AG04450 (cell line): ENCODE measurements at regions of chr6 and their contacts with region 1.

Region 1: DNA sequence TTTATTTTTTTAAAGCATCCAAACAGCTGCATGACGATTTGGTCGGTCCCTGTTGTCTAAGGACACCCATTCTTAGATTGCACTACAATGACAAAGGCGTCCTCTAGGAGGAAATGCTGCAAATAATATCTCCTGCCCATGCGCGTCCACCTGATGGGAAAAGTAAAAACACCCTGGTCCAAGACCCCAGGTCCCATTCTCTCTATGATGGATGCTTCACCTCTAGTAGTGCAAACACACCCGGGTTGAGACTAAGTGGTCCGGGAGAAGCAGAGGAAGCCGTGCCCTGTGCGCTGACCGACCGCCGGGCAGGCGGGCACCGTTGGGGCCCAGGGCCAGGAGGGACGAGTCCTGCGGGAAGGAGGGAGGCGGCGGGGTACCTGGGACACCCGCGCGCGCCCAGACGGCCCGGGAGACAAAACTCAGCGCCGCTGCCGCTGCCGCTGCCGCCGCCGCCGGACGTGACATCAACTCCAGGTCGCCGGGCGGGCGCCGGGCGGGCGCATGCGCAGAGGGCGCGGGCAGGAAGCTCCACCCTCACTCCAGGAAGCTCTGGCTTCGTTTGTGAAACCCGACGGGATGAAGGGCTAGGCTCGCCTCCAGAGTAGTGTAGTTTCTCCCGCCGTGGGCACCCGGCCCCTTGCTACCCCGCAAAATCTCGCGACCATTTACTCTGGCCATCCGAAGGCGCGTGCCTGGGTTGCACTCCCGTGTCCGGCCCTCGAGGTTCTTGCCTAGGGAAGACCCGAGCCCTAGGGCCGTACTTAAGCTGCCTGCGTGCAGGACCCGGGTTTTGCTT is at the start of gene TBC1D7:
- DNase-seq: peak; percentile 55
- H3K4me3 ChIP-seq: peak within 1 kb of the TSS; percentile 92
- H3K27ac ChIP-seq: peak within 1 kb of the TSS; percentile 75
- H3K27me3 ChIP-seq: no peaks in the 10 kb centered on the region
- CTCF ChIP-seq: no peak
- polyA plus RNA-seq, gene TBC1D7: 37.6 and 38.6 TPM in 2 replicates

Region 2: DNA sequence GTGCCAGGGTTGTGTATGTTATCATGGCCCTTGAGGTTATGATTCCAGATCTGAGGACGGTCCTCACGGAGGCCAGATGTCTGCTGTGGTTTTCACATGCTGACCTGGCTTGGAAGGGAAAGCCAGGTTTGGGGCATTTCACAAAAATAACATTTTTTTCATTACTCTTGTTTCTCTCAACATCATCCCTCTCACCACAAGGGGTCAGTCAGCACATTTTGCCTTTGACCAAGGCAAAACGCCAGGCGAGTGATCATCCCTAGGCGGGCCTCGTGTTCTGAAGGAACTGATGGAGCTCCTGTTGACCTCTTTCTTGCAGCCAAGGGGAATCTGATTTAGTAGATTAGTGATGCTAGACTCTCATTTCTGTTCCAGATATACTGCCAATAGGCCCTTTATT is 133.4 kb before region 1 on chr6:
- CTCF ChIA-PET with region 1: interaction called, 44 read pairs
- POLR2A ChIA-PET with region 1: interaction called, 3 read pairs
- DNase-seq: peak; percentile 37
- H3K4me3 ChIP-seq: no peak overlapping the region
- H3K27ac ChIP-seq: no peak overlapping the region
- H3K27me3 ChIP-seq: peaks cover 3% of the 10 kb centered on the region
- CTCF ChIP-seq: peak; percentile 75

Region 3: DNA sequence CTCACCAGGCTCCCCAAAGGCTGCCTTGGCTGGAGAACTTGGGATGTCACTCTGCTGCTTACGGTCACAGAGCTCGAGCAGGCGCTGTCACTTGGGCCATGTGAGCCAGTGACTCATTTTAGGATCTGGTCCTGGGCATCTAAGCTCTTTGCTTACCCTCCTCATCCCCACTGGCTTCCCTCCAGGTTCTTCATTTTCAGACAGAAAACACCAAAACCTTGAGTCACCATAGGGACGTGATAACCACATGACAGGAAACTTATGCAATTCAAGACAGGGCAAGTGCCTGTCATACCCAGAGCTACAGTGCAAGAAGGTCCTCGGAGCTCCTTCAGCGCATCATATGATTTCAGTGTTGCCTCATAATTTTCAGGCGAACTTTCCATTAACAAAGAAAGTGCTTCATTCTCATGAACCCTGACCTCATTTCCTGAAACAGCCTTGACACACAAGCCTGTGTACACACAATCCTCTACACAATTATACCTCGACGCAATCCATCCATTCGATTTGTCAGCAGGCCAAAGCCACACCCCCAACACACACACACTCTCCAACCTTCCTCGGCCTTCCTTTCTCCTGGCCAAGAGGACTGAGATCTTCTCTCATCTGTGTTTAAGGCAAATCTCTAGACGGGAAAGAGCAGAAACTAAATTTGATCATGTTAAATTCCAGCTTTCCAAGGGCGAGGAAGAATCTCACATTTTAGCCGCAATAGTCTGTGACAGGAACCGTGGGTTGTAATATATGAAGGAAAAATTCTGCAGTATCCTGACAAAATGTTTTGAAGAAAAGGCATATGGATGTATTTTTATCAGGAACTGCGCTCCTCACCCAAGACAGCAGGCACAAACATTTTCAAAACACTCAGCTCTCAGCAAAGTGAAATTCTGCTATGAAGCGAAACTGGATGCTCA is 25.3 kb before region 1 on chr6:
- CTCF ChIA-PET with region 1: no interaction called
- POLR2A ChIA-PET with region 1: interaction called, 23 read pairs
- DNase-seq: peak; percentile 85
- H3K4me3 ChIP-seq: peak overlapping the region; percentile 45
- H3K27ac ChIP-seq: peak overlapping the region; percentile 94
- H3K27me3 ChIP-seq: no peaks in the 10 kb centered on the region
- CTCF ChIP-seq: no peak

Region 4: DNA sequence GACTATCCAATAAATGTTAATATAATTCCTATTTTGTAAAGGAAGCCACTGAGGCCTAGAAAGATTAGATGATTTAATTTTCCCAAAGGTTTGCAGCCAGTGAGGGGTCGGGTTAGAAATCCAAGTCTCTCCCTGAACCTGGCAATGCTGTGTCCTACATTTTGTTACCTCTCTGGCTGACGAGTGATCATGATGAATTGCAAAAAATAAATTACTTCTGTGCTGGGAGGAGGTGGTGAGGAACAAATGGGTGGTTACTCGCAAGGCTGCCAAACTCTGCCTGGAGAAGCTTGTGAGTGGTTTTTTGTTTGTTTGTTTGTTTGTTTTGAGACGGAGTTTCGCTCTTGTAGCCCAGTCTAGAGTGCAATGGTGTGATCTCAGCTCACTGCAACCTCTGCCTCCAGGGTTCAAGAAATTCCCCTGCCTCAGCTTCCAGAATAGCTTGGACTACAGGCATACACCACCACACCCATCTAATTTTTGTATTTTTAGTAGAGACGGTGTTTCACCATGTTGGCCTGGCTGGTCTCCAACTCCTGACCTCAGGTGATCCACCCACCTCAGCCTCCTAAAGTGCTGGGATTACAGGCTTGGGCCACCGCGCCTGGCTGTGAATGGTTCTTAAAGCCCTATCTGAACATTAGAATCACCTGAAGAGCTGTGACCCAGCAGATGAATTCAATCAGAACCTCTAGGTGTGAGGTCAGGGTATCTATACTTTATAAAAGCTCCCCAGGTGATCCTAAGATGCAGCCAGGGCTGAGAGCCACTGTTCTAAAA is 20.2 kb after region 1 on chr6:
- CTCF ChIA-PET with region 1: no interaction called
- POLR2A ChIA-PET with region 1: no interaction called
- DNase-seq: no peak
- H3K4me3 ChIP-seq: no peak overlapping the region
- H3K27ac ChIP-seq: no peak overlapping the region
- H3K27me3 ChIP-seq: no peaks in the 10 kb centered on the region
- CTCF ChIP-seq: no peak

Region 5: DNA sequence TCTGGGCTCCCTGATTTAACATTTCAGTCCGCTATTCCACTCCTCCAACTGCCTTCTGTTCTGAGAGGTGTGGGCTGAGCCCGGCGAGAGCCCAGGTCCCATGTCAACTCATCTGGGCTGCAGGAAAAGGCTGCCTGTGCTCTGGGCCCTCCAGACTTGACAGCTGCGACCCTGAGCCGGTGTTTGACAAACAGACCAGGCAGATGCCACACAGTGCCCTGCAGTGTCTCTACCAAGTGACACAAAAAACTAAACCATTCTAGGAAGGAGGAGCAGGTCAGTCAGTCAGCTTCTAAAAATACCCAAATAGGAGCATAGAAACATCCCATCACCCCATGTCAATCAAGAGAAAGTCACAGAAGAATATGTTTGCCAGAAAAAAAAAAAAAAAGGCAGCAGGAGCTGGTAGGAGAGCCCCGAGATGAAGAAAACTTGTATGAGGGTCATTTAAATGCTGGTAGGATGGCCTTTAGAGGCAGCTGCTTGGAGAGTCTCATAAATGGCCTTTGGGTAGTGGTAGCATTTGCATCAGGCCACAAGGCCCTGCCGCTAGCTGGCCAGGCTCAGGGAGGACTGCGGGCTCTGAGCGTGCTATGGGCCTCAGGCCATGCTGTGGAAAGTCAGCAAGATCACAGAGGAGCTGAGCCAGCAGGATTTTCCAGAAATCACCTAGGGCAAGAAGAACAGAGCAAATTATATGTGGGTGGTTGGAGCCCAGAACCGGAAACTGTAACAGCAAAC is 195.7 kb after region 1 on chr6:
- CTCF ChIA-PET with region 1: interaction called, 10 read pairs
- POLR2A ChIA-PET with region 1: no interaction called
- DNase-seq: no peak
- H3K4me3 ChIP-seq: no peak overlapping the region
- H3K27ac ChIP-seq: no peak overlapping the region
- H3K27me3 ChIP-seq: no peaks in the 10 kb centered on the region
- CTCF ChIP-seq: no peak

Region 6: GRCh38 chr6:13538084-13538483 is 209.8 kb after region 1 on chr6:
- CTCF ChIA-PET with region 1: interaction called, 20 read pairs
- POLR2A ChIA-PET with region 1: no interaction called
- DNase-seq: peak; percentile 30
- H3K4me3 ChIP-seq: no peak overlapping the region
- H3K27ac ChIP-seq: no peak overlapping the region
- H3K27me3 ChIP-seq: peaks cover 2% of the 10 kb centered on the region
- CTCF ChIP-seq: peak; percentile 56

Region 7: GRCh38 chr6:13614926-13615798 is 286.9 kb after region 1 on chr6 and contains the start of gene NOL7:
- CTCF ChIA-PET with region 1: interaction called, 11 read pairs
- POLR2A ChIA-PET with region 1: interaction called, 15 read pairs
- DNase-seq: peak; percentile 98
- H3K4me3 ChIP-seq: peak within 1 kb of the TSS; percentile 98
- H3K27ac ChIP-seq: peak within 1 kb of the TSS; percentile 94
- H3K27me3 ChIP-seq: no peaks in the 10 kb centered on the region
- CTCF ChIP-seq: peak; percentile 87
- polyA plus RNA-seq, gene NOL7: 31.3 and 46.6 TPM in 2 replicates